ENCODE measurements at regions of chr18 and their contacts with region 1.

Region 1: DNA sequence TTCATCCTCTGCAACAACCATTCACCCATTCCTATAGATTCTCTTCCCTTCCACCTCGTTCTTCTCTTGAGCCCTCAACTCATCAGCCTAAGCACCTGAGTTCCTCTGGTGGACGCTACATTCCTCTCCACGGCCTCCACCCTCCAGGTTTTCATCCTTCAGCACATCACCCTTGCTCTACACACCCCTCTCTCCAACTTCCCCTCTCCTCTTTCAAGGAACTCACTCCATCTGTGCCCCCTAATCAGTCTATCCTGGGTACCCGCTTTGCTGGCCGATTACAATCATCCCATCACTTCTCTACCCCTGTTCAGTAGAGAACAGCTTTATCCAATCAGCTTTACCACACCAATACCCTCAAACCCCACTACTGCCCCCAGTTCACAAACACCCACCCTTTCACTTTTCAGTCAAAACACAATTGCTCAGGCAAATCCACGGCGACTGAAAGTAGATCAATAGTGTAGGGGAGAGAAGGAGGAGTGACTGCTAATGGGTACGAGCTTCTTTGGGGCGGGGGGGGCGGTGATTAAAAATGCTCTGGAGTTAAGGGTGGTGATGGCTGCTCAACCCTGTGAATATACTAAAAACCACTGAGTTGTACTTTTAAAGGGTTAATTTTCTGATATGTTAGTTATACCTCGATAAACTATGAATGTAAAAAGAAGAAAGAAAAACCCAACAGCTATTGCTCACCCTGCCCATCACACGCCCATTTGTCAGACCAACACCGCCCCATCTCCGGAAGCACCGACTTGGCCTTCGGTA is 857 bp downstream of the DYM start:
- DNase-seq: peak; percentile 12
- ATAC-seq: peak; percentile 56
- H3K4me3 ChIP-seq: peak overlapping the region; percentile 86
- H3K27ac ChIP-seq: peak overlapping the region; percentile 59; the same call in 1 of the 2 replicates
- H3K4me1 ChIP-seq: peaks cover 3% of the 10 kb centered on the region
- H3K27me3 ChIP-seq: no peaks in the 10 kb centered on the region
- CTCF ChIP-seq: no peak
- POLR2A ChIP-seq: no peak
- RAD21 ChIP-seq: no peak

Region 2: DNA sequence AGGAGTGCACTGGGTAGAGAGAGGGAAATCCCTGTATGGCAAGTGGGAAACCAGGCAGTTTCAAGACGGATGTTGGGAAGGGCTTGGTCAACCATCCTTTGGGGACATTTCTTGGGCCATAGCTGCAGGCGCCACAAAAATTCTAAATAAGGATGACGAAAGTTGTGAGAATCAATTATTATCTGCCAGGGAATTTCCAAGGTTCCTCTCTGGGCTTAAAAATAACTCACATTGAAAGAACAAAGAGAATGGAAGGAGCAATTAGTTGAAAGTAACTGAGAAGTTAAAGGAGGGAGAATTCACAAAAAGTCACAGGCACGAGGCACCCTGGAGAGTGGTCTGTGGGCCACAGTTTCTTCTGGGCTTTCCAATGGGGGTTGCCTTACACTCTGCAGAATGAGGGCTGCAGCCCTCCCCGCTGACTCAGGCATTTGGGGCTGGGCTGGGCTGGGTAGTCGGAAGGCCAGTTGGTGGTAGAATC is 704.6 kb before region 1 on chr18:
- CTCF ChIA-PET with region 1: no interaction called
- POLR2A ChIA-PET with region 1: interaction called, 18 read pairs
- dilution Hi-C with region 1: no loop called
- in situ Hi-C with region 1: no loop called
- intact Hi-C with region 1: no loop called
- DNase-seq: no peak
- ATAC-seq: no peak
- H3K4me3 ChIP-seq: no peak overlapping the region
- H3K27ac ChIP-seq: no peak overlapping the region
- H3K4me1 ChIP-seq: peaks cover 5% of the 10 kb centered on the region
- H3K27me3 ChIP-seq: no peaks in the 10 kb centered on the region
- CTCF ChIP-seq: no peak
- POLR2A ChIP-seq: no peak
- RAD21 ChIP-seq: no peak

Region 3: DNA sequence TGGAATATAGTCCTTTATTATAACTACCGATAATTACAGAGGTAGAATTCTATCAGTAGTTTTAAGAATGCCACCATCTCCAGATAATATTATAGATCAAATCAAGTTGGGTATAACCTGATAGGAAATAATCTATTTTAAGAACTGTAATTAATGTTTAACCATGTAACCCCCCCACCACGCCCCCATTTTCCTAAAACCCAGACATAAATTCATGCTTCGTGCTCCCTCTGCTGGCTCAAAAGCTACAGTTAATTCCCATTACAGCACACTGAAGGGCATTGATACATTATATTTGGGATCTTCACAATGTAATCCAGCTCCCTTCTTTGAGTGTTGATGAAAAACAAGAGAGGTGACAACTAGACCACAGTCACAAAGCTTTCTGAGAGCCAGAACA is 280.9 kb before region 1 on chr18:
- CTCF ChIA-PET with region 1: no interaction called
- POLR2A ChIA-PET with region 1: no interaction called
- dilution Hi-C with region 1: no loop called
- in situ Hi-C with region 1: no loop called
- intact Hi-C with region 1: no loop called
- DNase-seq: peak; percentile 23
- ATAC-seq: no peak
- H3K4me3 ChIP-seq: no peak overlapping the region
- H3K27ac ChIP-seq: no peak overlapping the region
- H3K4me1 ChIP-seq: peaks cover 5% of the 10 kb centered on the region; the same call in 1 of the 2 replicates
- H3K27me3 ChIP-seq: no peaks in the 10 kb centered on the region
- CTCF ChIP-seq: peak; percentile 56
- POLR2A ChIP-seq: no peak
- RAD21 ChIP-seq: peak; percentile 68

Region 4: DNA sequence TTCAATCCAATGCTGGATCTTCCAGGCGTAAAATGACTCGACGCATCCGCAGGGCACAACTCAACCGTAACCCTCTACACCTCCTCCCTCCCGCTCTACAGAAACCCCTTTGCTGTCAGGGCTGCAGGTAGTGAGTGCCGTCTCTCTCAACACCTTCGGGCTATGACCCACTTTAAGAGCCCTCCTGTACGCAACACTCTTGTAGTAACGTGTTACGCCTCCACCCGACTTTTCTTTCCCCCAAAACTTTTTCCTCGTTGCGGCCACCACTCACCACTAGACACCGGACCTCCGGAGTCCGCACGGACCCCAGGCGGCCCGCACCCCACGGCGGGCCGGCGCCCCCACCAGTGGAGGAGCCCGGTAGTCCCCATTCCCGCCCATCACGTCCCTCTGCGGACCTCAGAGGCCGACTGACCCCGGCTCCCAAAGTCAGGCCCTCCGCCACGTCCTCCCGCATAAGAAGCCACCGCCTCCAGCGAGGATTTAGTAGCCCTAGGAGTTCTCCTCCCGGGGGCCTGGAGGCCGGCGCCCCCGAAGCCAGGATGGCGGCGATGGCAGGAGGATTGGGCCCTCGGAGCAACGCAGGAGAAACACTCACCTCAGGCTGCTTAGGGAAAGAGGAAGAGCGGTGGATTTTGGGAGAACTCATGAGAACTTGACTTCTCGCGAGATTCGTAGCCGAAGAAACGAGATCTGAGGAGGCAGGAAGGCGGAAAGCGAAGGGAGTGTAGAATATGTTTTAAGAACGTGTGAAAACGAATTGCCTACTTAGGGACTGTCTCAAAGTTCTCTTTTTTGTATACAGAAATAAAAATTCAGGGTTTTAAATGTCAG is 32.5 kb after region 1 on chr18:
- CTCF ChIA-PET with region 1: no interaction called
- POLR2A ChIA-PET with region 1: no interaction called
- dilution Hi-C with region 1: no loop called
- in situ Hi-C with region 1: no loop called
- intact Hi-C with region 1: no loop called
- DNase-seq: peak; percentile 99
- ATAC-seq: peak; percentile 91
- H3K4me3 ChIP-seq: peak within 1 kb of the TSS; percentile 96
- H3K27ac ChIP-seq: peak within 1 kb of the TSS; percentile 90
- H3K4me1 ChIP-seq: no peaks in the 10 kb centered on the region
- H3K27me3 ChIP-seq: no peaks in the 10 kb centered on the region
- CTCF ChIP-seq: no peak
- POLR2A ChIP-seq: peak; percentile 99
- RAD21 ChIP-seq: no peak

Region 5: GRCh38 chr18:49920731-49921130 is 461.1 kb after region 1 on chr18:
- CTCF ChIA-PET with region 1: no interaction called
- POLR2A ChIA-PET with region 1: no interaction called
- dilution Hi-C with region 1: no loop called
- in situ Hi-C with region 1: no loop called
- intact Hi-C with region 1: no loop called
- DNase-seq: no peak
- ATAC-seq: no peak
- H3K4me3 ChIP-seq: no peak overlapping the region
- H3K27ac ChIP-seq: no peak overlapping the region
- H3K4me1 ChIP-seq: no peaks in the 10 kb centered on the region
- H3K27me3 ChIP-seq: peaks cover 13% of the 10 kb centered on the region
- CTCF ChIP-seq: no peak
- POLR2A ChIP-seq: no peak
- RAD21 ChIP-seq: no peak